ENCODE measurements at regions of chr20 and their contacts with region 1.

Region 1: DNA sequence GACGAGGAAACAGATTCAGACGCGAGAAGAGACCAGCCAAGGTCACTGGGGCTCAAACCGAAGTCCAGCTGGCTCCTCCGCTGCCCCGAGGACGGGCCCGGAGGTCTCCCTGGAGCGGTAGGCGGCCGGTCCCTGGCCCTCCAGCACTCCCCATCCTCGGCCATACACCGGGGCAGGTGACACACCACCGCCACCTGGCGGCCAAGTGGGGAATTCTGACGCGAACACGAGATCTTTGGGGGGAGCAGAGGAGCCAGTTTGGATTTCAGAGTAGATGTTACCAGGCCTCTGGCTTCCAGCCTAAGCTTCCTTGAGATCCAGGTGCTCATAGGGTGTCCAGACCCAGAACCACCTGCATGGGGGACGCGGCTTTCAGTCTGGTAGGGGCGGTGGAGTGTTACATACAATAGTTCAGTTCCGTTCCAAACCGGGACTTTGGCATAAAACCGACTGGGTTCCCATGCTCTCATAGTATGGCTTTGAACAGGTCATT is 16.1 kb downstream of the BPIFB1 start:
- DNase-seq: peak; percentile 69
- ATAC-seq: peak; percentile 75
- H3K4me3 Mint-ChIP-seq: no peak overlapping the region
- H3K27ac Mint-ChIP-seq: no peak overlapping the region
- H3K4me1 Mint-ChIP-seq: no peaks in the 10 kb centered on the region
- H3K27me3 Mint-ChIP-seq: peaks cover 13% of the 10 kb centered on the region
- CTCF ChIP-seq: peak; percentile 95

Region 2: GRCh38 chr20:32674362-32674789 is 624.8 kb before region 1 on chr20:
- CTCF ChIA-PET with region 1: no interaction called
- POLR2A ChIA-PET with region 1: no interaction called
- intact Hi-C with region 1: loop called (anchors 10 kb)
- DNase-seq: no peak
- ATAC-seq: peak; percentile 38
- H3K4me3 Mint-ChIP-seq: no peak overlapping the region
- H3K27ac Mint-ChIP-seq: peak overlapping the region; percentile 26
- H3K4me1 Mint-ChIP-seq: peaks cover 32% of the 10 kb centered on the region
- H3K27me3 Mint-ChIP-seq: no peaks in the 10 kb centered on the region
- CTCF ChIP-seq: no peak

Region 3: DNA sequence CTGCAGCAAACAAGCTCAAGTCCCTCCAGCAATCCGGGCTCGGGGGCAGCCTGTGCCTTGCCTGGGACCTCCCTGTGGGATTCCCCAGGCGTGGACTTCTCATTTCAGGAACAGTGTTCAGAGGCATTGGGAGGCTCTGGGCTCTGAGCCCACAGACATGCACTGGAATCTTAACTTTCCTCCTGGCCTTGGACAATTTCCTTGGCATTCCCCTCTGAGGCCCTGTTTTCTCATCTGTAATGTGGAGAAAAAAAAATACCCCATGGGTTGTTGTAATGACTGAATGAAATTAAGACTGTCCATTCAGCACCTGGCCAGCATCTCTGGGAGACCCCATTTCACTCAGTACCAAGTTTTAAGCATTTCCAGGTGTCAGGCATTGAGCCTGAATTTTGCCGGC is 202.2 kb before region 1 on chr20:
- CTCF ChIA-PET with region 1: no interaction called
- POLR2A ChIA-PET with region 1: no interaction called
- intact Hi-C with region 1: loop called (anchors 5 kb)
- DNase-seq: no peak
- ATAC-seq: no peak
- H3K4me3 Mint-ChIP-seq: no peak overlapping the region
- H3K27ac Mint-ChIP-seq: no peak overlapping the region
- H3K4me1 Mint-ChIP-seq: no peaks in the 10 kb centered on the region
- H3K27me3 Mint-ChIP-seq: peaks cover 3% of the 10 kb centered on the region
- CTCF ChIP-seq: no peak